ENCODE measurements at regions of chr21 and their contacts with region 1.

Region 1: DNA sequence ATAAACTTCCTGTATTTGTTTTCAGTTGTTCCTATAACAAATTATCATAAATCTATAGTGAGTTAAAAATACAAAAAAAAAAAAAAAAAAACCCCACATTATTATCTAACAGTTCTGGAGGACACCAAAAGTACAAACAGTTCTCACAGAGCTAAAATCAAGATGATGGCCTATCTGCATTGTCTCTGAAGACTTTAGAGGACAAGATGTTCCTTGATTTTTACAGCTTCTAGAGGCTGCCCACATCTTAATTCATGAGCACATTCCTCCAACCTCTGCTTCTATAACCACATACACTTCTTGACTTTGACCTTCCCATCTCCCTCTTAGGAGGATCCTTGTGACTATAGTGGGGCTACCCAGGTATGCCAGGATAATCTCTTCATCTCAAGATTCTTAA is 806.1 kb downstream of the LTN1 start:
- DNase-seq: no peak
- ATAC-seq: no peak
- H3K4me3 ChIP-seq: no peak overlapping the region
- H3K27ac ChIP-seq: no peak overlapping the region
- H3K4me1 ChIP-seq: no peaks in the 10 kb centered on the region
- H3K27me3 ChIP-seq: no peaks in the 10 kb centered on the region
- CTCF ChIP-seq: no peak

Region 2: GRCh38 chr21:28099001-28099705 is 87.5 kb before region 1 on chr21:
- CTCF ChIA-PET with region 1: interaction called, 21 read pairs
- POLR2A ChIA-PET with region 1: no interaction called
- intact Hi-C with region 1: no loop called
- DNase-seq: no peak
- ATAC-seq: no peak
- H3K4me3 ChIP-seq: no peak overlapping the region
- H3K27ac ChIP-seq: no peak overlapping the region
- H3K4me1 ChIP-seq: no peaks in the 10 kb centered on the region
- H3K27me3 ChIP-seq: no peaks in the 10 kb centered on the region
- CTCF ChIP-seq: no peak

Measured in PC-3 (cell line).